AG04450 (cell line): ENCODE measurements at regions of chr5 and their contacts with region 1.

Region 1: DNA sequence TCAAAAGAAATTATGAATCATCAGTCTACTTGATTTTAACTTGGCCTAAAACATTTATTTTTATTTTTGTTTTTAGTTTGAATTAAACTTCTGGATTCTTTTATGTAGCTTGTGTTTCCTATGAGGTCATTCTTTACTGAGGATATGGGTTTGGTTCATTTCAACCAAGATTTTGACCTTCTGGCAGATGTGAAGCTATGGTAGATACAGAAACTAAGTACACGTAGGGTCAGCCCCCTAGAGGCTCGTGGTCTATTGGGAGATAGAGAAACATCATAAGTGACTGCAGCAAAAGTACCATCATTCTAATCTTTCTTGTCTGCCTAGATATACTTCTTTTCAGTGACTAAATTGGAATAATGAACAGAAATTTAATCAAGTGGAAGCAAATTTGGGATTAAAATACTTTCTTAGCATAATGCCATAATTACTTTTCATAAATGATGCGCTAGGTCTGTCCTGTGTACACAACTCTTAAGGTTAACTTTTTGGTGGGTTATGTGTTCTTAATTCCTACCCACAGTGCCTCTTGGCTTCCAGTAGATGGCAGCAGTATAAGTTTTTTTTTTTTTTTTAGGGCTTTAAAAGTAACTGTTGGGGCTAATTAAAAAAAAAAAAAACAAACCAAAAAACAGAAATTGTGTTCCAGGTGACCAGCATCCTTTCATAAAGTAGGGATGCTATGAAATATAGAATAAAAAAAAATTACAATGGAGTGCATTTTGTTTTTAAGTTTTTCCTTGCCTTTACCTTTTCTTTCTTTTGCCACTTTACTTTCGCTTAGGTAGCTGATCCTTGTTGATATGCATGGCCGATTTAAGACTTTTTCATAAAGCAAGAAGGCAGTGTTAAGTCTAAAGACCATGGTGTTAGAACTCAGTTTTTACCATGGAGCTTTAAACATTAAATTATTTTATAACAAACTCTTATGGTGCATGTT is 49.9 kb downstream of the LRRTM2 start:
- DNase-seq: no peak
- H3K4me3 ChIP-seq: no peak overlapping the region
- H3K27ac ChIP-seq: no peak overlapping the region
- H3K27me3 ChIP-seq: no peaks in the 10 kb centered on the region
- CTCF ChIP-seq: peak; percentile 67

Region 2: DNA sequence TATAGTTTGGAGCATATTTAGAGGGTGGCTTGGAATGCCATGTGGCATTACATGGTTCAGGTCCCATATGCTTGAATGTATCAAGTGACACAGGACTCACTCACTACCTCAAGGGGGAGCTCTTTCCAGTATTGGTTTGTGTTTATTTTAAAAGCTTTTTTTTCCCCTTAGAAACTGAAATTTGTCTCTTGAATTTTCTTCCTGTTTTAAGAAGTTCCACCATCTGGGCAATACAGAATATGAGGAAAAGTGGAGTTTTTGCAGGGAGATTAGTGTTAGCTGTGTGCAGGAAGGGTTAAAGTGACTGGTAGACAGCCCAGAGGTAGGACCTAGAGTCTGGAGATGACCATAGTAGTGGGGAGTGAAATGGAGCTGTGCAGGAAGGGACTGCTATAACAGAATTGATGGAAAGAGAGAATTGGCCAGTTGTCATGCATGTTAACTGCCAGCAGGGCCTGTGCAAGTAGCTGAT is 35.4 kb before region 1 on chr5:
- CTCF ChIA-PET with region 1: interaction called, 12 read pairs
- POLR2A ChIA-PET with region 1: no interaction called
- DNase-seq: no peak
- H3K4me3 ChIP-seq: no peak overlapping the region
- H3K27ac ChIP-seq: no peak overlapping the region
- H3K27me3 ChIP-seq: no peaks in the 10 kb centered on the region
- CTCF ChIP-seq: peak; percentile 55

Region 3: GRCh38 chr5:138809391-138809790 is 15.8 kb before region 1 on chr5:
- CTCF ChIA-PET with region 1: interaction called, 17 read pairs
- POLR2A ChIA-PET with region 1: no interaction called
- DNase-seq: peak; percentile 13
- H3K4me3 ChIP-seq: no peak overlapping the region
- H3K27ac ChIP-seq: no peak overlapping the region
- H3K27me3 ChIP-seq: no peaks in the 10 kb centered on the region
- CTCF ChIP-seq: no peak

Region 4: GRCh38 chr5:138874771-138875551 is 49.8 kb after region 1 on chr5 and contains the start of gene LRRTM2:
- CTCF ChIA-PET with region 1: interaction called, 15 read pairs
- POLR2A ChIA-PET with region 1: no interaction called
- DNase-seq: peak; percentile 85
- H3K4me3 ChIP-seq: peak within 1 kb of the TSS; percentile 58
- H3K27ac ChIP-seq: peak within 1 kb of the TSS; percentile 87
- H3K27me3 ChIP-seq: no peaks in the 10 kb centered on the region
- CTCF ChIP-seq: no peak
- polyA plus RNA-seq, gene LRRTM2: 1.9 and 2.6 TPM in 2 replicates

Region 5: DNA sequence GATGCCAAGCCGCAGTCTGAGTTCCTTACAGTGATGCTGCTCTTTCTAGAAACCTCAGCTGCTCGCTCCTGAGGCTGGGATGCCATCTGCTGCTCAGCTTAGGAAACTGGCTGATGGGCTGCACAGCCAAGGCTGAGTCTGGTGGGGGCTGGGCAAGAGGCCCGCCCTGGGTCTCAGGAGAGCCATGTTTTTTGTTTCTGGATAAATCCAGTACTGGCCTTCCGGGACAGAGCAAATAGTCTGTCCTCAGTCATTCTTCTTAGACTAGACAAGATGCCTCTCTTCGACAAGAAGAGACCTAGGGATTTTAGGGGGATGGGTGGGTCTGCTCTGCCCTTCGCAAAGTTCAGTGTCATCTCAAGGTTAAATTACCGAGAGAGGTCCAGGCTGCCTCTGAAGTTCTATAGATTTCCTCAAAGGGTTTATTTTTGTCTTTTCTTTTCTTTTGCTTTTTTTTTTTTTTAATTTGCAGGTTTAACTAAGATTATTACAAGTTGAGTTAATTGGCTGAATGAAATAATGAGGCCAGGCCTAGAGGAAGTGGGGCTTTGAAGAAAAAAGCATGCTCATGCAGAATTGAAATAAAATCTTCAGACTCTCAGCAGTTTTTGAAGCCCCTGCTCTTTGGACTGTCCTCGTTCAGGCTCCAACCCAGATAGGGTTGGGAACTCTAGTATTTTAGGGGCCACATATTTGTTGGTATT is 437.7 kb after region 1 on chr5:
- CTCF ChIA-PET with region 1: interaction called, 11 read pairs
- POLR2A ChIA-PET with region 1: no interaction called
- DNase-seq: peak; percentile 87
- H3K4me3 ChIP-seq: no peak overlapping the region
- H3K27ac ChIP-seq: no peak overlapping the region
- H3K27me3 ChIP-seq: peaks cover 4% of the 10 kb centered on the region
- CTCF ChIP-seq: peak; percentile 96